ENCODE measurements at regions of chr19 and their contacts with region 1.

Region 1: GRCh38 chr19:58154679-58155648 is 4.4 kb upstream of the ZNF329 start:
- DNase-seq: peak; percentile 98 to 100
- ATAC-seq: peak; percentile 97
- H3K4me3 ChIP-seq: peak overlapping the region; percentile 67 to 91
- H3K27ac ChIP-seq: peak overlapping the region; percentile 60 to 81
- H3K4me1 ChIP-seq: peaks cover 0 to 3% of the 10 kb centered on the region in 2 donors
- H3K27me3 ChIP-seq: no peaks in the 10 kb centered on the region

Region 2: DNA sequence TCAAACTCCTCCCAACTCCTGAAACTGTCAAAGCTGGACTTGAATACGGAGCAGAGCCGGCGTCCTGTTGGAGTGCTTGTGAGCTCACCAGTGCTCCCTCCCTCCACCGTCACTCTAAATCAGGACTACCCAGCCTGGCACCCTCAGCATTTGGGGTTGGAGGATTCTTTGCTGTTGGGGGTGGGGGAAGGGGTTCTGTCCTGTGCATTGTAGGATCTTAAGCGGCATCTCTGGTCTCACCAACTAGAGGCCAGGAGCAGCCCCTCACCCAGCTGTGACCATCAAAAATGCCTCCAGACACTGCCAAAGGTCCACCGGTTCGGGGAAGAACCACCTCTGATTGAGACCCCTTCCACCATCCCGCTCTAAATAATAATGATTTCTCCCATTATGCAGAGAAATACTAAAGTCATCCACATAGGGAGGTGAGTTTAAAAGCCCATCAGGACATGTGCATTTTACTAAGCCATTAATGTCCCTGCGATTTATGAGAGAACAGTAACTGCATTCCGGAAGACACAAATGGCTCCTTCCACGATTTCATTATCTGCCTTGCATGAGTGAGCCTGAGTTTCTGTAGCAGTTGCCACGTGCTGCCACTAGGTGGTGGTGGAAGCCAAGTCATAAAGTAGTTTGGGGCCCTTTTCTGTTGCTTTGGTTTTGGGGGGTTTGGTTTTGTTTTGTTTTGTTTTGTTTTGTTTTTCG is 1051.2 kb before region 1 on chr19:
- intact Hi-C with region 1: loop called (anchors 10 kb)
- DNase-seq: peak in 1 of 2 donors; percentile 60
- ATAC-seq: peak; percentile 75
- H3K4me3 ChIP-seq: no peak overlapping the region
- H3K27ac ChIP-seq: no peak overlapping the region
- H3K4me1 ChIP-seq: no peaks in the 10 kb centered on the region
- H3K27me3 ChIP-seq: peaks cover 0 to 2% of the 10 kb centered on the region in 2 donors

Region 3: DNA sequence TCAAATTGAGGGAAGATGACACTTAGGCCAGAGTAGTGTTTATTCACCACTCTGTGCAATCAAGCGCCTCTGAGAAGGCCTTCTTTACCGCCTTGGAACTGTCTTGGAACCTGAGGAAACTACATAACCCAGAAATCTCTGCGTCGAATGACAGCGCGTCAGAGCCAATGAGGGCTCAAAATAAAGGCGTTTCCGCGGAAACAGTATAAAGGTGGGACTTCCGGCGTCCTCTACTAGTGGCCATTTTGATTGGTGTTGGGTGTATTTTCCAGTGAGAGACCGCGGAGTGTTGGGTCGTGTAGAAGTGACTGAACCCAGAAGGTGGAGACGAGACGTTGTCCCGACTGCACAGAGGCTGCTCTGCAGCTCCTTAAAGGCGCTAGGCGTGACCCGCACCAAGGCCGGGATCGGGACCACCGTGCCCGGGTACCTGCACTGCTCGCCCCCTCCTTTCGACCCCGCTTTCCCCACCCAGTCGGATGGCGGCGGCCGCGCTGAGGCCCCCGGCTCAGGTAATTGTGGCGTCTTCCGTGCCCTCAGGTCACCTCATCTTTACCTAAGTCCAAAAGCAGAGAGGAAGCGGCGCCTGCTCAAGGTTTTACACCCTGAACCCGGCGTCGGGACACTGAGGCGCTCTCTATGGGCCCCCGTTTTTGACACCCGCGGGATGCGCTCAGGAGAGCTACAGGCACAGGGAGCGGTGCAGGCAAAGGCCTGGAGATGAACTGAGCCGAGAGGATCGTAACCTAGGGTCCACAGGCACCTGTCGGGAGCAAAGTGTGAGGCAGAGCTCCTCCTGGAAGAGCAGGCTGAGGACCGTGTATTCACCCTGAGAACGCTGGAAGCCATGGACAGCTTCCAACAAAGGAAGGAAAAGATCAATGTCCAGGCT is 408.1 kb before region 1 on chr19 and contains the start of gene ZNF776:
- intact Hi-C with region 1: loop called in 1 of 2 experiments (anchors 5 kb)
- DNase-seq: peak; percentile 87
- ATAC-seq: peak; percentile 94
- H3K4me3 ChIP-seq: peak within 1 kb of the TSS; percentile 11 to 96
- H3K27ac ChIP-seq: no peak within 1 kb of the TSS
- H3K4me1 ChIP-seq: no peaks in the 10 kb centered on the region
- H3K27me3 ChIP-seq: no peaks in the 10 kb centered on the region
- total RNA-seq, gene ZNF776: 7.8 to 13.6 TPM

Region 4: GRCh38 chr19:58021541-58022282 is 133.3 kb before region 1 on chr19:
- intact Hi-C with region 1: loop called (anchors 1 to 2 kb)
- DNase-seq: peak in 1 of 2 donors; percentile 66
- ATAC-seq: peak; percentile 85
- H3K4me3 ChIP-seq: no peak overlapping the region
- H3K27ac ChIP-seq: no peak overlapping the region
- H3K4me1 ChIP-seq: no peaks in the 10 kb centered on the region
- H3K27me3 ChIP-seq: no peaks in the 10 kb centered on the region

Region 5: DNA sequence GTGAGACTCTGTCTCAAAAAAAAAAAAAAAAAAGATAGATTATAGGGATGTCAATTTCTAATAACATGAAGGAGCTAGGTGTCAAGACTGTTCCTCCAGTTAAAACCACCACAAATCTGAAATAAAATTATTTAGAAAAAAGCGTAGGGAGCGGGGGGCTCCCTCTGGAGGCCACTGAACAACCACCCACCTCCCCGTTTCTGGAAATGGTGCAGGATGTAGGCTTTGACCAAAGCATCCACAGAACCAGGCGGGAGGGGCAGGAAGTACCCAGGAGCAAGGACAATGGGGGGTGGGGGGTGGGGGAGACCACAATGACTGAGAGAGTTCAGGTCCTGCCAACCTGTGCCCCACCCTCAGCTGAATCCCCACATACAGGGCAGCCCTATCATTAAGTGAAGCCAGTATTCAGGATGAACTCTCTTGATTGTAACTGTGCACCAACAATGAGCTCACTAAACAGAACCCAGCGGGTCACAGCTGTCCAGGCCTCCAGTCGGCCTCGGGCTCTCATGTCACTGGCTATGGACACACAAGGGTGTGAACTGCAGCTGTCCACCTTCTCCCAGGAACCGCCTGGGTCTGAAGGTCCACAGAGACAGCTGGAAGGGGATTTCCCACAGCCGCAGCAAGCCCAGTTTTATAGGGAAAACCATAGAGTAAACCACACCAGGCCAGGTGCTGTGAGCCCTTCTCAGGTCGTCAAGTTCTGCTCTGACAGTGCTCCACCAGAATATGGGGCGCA is 63.5 kb before region 1 on chr19:
- intact Hi-C with region 1: no loop called
- DNase-seq: peak in 1 of 2 donors; percentile 8
- ATAC-seq: no peak
- H3K4me3 ChIP-seq: no peak overlapping the region
- H3K27ac ChIP-seq: no peak overlapping the region
- H3K4me1 ChIP-seq: no peaks in the 10 kb centered on the region
- H3K27me3 ChIP-seq: no peaks in the 10 kb centered on the region

Region 6: DNA sequence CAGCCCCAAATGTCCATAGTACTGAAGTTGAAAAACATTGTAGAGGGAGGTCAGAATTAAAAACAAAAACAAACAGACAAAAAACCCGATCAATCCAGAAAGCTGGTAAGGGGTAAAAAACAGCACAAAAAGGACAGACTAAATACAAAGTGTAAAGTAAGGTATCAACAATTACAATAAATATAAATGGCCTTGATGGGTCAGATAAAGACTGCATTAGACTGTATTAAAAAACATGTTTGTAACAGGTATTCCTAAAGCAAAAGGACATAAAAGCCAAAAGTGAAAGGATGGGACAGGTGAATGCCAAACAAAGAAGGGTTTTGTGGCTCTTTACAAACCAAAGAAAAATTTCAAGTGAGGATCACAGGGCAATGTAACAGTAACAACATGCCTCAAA is 20.7 kb before region 1 on chr19:
- intact Hi-C with region 1: no loop called
- DNase-seq: no peak
- ATAC-seq: no peak
- H3K4me3 ChIP-seq: no peak overlapping the region
- H3K27ac ChIP-seq: no peak overlapping the region
- H3K4me1 ChIP-seq: no peaks in the 10 kb centered on the region
- H3K27me3 ChIP-seq: no peaks in the 10 kb centered on the region